ENCODE measurements at regions of chr9 and their contacts with region 1.

Region 1: DNA sequence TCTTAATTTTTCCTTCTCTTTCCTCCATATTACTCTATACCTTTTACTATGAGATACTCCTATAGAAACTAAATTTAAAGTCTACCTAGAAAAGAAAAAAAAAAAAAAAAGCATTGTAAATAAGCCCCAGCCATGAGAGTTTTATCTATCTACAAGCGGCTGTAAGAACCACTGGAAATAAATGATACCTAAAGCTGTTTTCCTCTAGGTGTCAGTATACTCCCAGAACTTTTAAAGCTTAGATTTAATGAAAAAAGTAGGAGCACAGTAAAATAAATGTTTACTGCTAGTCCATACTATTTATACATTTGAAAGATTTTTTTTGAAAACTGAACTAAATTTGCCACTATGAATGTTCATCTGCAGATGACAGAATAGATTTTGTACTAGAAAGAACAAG is 26.2 kb downstream of the TYRP1 start:
- DNase-seq: no peak
- ATAC-seq: no peak
- H3K4me3 ChIP-seq: no peak overlapping the region
- H3K27ac ChIP-seq: no peak overlapping the region
- H3K4me1 ChIP-seq: no peaks in the 10 kb centered on the region
- H3K27me3 ChIP-seq: no peaks in the 10 kb centered on the region
- CTCF ChIP-seq: peak; percentile 33; the same call in 1 of the 2 replicates

Region 2: GRCh38 chr9:12618956-12619355 is 100.5 kb before region 1 on chr9:
- CTCF ChIA-PET with region 1: no interaction called
- POLR2A ChIA-PET with region 1: no interaction called
- in situ Hi-C with region 1: no loop called
- intact Hi-C with region 1: no loop called
- DNase-seq: no peak
- ATAC-seq: no peak
- H3K4me3 ChIP-seq: no peak overlapping the region
- H3K27ac ChIP-seq: no peak overlapping the region
- H3K4me1 ChIP-seq: no peaks in the 10 kb centered on the region
- H3K27me3 ChIP-seq: no peaks in the 10 kb centered on the region
- CTCF ChIP-seq: no peak

Region 3: GRCh38 chr9:12702160-12702758 is 17.2 kb before region 1 on chr9:
- CTCF ChIA-PET with region 1: no interaction called
- POLR2A ChIA-PET with region 1: no interaction called
- in situ Hi-C with region 1: no loop called
- intact Hi-C with region 1: no loop called
- DNase-seq: no peak
- ATAC-seq: no peak
- H3K4me3 ChIP-seq: no peak overlapping the region
- H3K27ac ChIP-seq: no peak overlapping the region
- H3K4me1 ChIP-seq: no peaks in the 10 kb centered on the region
- H3K27me3 ChIP-seq: no peaks in the 10 kb centered on the region
- CTCF ChIP-seq: peak; percentile 62

Region 4: GRCh38 chr9:12874395-12874794 is 155.0 kb after region 1 on chr9:
- CTCF ChIA-PET with region 1: no interaction called
- POLR2A ChIA-PET with region 1: no interaction called
- in situ Hi-C with region 1: no loop called
- intact Hi-C with region 1: no loop called
- DNase-seq: no peak
- ATAC-seq: no peak
- H3K4me3 ChIP-seq: no peak overlapping the region
- H3K27ac ChIP-seq: no peak overlapping the region
- H3K4me1 ChIP-seq: no peaks in the 10 kb centered on the region
- H3K27me3 ChIP-seq: no peaks in the 10 kb centered on the region
- CTCF ChIP-seq: no peak

Region 5: DNA sequence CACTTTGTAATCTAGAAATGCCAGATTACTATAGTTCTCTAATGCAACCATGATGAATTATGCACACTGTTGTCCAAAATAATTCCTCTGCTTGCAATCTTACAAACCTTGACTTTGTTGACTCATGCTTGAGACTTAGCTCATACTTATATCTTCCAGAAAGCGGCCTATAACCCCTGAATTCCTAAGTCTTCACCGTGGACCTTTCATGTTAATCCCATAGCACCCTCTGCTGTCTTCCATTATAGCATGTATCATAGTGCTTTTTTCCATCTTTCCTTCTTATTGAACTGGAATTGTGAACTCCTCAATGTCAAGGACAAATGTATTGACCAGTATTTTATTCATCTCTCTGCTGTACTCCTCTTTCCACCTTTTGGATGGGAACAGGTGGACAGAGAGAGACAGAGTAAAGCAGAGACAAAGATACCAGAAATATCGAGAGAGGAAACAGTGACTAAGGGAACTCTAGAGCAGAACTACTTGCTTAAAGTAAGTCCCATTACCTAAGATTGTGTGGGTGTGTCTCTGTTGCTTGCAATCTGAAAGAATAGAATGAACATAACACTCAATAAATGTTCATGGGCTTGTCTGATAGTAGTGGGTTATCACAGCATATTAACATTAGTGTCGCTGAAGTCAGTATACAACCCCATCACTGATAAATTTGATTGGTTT is 165.4 kb after region 1 on chr9:
- CTCF ChIA-PET with region 1: no interaction called
- POLR2A ChIA-PET with region 1: no interaction called
- in situ Hi-C with region 1: no loop called
- intact Hi-C with region 1: loop called (anchors 2 kb)
- DNase-seq: peak; percentile 13
- ATAC-seq: 0 out of 2 replicates have a peak, but pooled peaks have one; percentile 62
- H3K4me3 ChIP-seq: no peak overlapping the region
- H3K27ac ChIP-seq: no peak overlapping the region; the same call in 1 of the 2 replicates
- H3K4me1 ChIP-seq: no peaks in the 10 kb centered on the region
- H3K27me3 ChIP-seq: no peaks in the 10 kb centered on the region
- CTCF ChIP-seq: peak; percentile 32; the same call in 1 of the 2 replicates

Region 6: DNA sequence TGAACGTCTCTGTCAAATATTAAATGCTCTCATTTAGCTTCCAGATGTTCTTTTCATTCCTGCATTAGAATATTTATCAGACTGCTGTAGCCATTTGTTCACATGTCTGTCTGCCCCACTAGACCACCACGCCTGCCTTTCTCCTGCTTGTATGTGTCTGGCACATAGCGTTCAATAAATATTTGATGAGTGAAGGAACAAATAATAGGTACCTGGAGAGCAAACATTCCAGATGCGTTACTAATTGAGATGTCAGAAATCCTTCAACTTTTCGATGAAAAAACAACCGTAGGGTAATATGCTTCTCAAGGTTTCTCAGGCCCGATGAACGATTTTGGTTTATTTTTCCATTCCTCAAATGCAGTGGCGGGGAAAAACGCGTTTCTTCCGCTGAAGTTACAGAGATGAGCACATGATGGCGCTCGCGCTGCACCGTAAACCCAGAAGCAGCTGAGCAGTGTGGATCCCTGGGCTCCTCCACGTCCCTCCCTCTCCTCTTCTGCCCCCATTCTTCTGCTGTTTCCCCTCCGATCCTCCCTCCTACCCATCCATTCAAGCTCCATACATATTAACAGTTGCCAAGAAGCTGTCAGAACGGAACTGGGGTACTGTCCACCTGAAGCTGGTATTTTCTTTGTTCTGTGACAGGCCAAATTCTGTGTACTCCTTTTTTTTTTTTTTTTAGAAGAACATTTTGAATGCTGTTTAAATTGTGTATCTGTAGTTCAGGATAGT is 314.7 kb after region 1 on chr9:
- CTCF ChIA-PET with region 1: interaction called, 3 read pairs
- POLR2A ChIA-PET with region 1: no interaction called
- in situ Hi-C with region 1: no loop called
- intact Hi-C with region 1: loop called (anchors 5 kb)
- DNase-seq: peak; percentile 24
- ATAC-seq: peak; percentile 83
- H3K4me3 ChIP-seq: peak overlapping the region in 1 of 2 experiments; percentile 36; a peak in 2 of 4 replicates
- H3K27ac ChIP-seq: no peak overlapping the region
- H3K4me1 ChIP-seq: no peaks in the 10 kb centered on the region
- H3K27me3 ChIP-seq: no peaks in the 10 kb centered on the region
- CTCF ChIP-seq: peak; percentile 64

Region 7: GRCh38 chr9:13088720-13089427 is 369.4 kb after region 1 on chr9:
- CTCF ChIA-PET with region 1: interaction called, 4 read pairs
- POLR2A ChIA-PET with region 1: no interaction called
- in situ Hi-C with region 1: no loop called
- intact Hi-C with region 1: loop called (anchors 5 kb)
- DNase-seq: peak; percentile 17
- ATAC-seq: peak; percentile 63
- H3K4me3 ChIP-seq: no peak overlapping the region
- H3K27ac ChIP-seq: no peak overlapping the region
- H3K4me1 ChIP-seq: no peaks in the 10 kb centered on the region
- H3K27me3 ChIP-seq: no peaks in the 10 kb centered on the region
- CTCF ChIP-seq: peak; percentile 57